ENCODE measurements at regions of chr4 and their contacts with region 1.

Region 1: GRCh38 chr4:173264684-173265185 is 69.4 kb downstream of the HMGB2 start:
- DNase-seq: peak; percentile 65 to 90 (median 85)
- H3K4me3 ChIP-seq: peak overlapping the region in 5 of 7 experiments; percentile 19 to 57 (median 44)
- H3K27ac ChIP-seq: peak overlapping the region; percentile 29 to 36
- H3K4me1 ChIP-seq: peaks cover 10 to 25% (median 21%) of the 10 kb centered on the region in 4 experiments
- H3K27me3 ChIP-seq: no peaks in the 10 kb centered on the region

Region 2: GRCh38 chr4:173280998-173281397 is 16.3 kb after region 1 on chr4:
- CTCF ChIA-PET with region 1: interaction called, 10 read pairs
- POLR2A ChIA-PET with region 1: no interaction called
- DNase-seq: no peak
- H3K4me3 ChIP-seq: peak overlapping the region in 1 of 7 experiments; percentile 20
- H3K27ac ChIP-seq: peak overlapping the region in 1 of 2 experiments; percentile 50
- H3K4me1 ChIP-seq: peaks cover 0 to 27% (median 0%) of the 10 kb centered on the region in 4 experiments
- H3K27me3 ChIP-seq: no peaks in the 10 kb centered on the region

Measured in common myeloid progenitor, CD34-positive (primary cell).